MCF 10A (cell line): ENCODE measurements at regions of chr6 and their contacts with region 1.

Region 1: GRCh38 chr6:100116411-100117194 is 122.6 kb upstream of the MCHR2 start:
- DNase-seq: peak; percentile 74
- H3K4me3 Mint-ChIP-seq: no peak overlapping the region
- H3K27ac Mint-ChIP-seq: no peak overlapping the region
- H3K4me1 Mint-ChIP-seq: no peaks in the 10 kb centered on the region
- H3K27me3 Mint-ChIP-seq: no peaks in the 10 kb centered on the region
- CTCF ChIP-seq: peak; percentile 70

Region 2: GRCh38 chr6:98992535-98992934 is 1124.1 kb before region 1 on chr6:
- CTCF ChIA-PET with region 1: no interaction called
- POLR2A ChIA-PET with region 1: no interaction called
- intact Hi-C with region 1: no loop called
- DNase-seq: no peak
- H3K4me3 Mint-ChIP-seq: no peak overlapping the region
- H3K27ac Mint-ChIP-seq: no peak overlapping the region
- H3K4me1 Mint-ChIP-seq: no peaks in the 10 kb centered on the region
- H3K27me3 Mint-ChIP-seq: peaks cover 49% of the 10 kb centered on the region
- CTCF ChIP-seq: no peak

Region 3: DNA sequence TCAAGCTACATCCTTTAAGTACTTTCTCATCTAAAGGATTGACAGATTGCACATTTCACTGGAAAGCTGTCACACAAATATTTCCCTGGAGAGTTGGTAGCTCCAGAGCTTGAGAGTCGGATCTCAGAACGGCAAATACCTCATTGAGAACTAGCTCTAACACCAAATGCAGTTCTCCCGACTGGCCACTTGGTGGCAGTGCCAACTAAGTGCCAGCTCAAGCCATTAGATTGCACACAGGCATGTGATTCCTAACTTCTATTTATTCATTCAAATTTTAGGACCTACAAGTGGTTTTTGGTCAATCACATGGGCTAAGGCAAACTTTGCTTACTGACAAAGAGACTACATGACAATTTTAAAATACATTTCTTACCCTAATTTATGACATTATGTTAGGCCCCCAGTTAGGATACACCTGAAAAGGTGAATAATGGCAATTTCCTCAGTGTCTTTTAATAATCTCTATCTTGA is 114.7 kb before region 1 on chr6:
- CTCF ChIA-PET with region 1: interaction called, 15 read pairs
- POLR2A ChIA-PET with region 1: no interaction called
- intact Hi-C with region 1: no loop called
- DNase-seq: peak; percentile 66
- H3K4me3 Mint-ChIP-seq: no peak overlapping the region
- H3K27ac Mint-ChIP-seq: no peak overlapping the region
- H3K4me1 Mint-ChIP-seq: peaks cover 8% of the 10 kb centered on the region
- H3K27me3 Mint-ChIP-seq: no peaks in the 10 kb centered on the region
- CTCF ChIP-seq: peak; percentile 91

Region 4: DNA sequence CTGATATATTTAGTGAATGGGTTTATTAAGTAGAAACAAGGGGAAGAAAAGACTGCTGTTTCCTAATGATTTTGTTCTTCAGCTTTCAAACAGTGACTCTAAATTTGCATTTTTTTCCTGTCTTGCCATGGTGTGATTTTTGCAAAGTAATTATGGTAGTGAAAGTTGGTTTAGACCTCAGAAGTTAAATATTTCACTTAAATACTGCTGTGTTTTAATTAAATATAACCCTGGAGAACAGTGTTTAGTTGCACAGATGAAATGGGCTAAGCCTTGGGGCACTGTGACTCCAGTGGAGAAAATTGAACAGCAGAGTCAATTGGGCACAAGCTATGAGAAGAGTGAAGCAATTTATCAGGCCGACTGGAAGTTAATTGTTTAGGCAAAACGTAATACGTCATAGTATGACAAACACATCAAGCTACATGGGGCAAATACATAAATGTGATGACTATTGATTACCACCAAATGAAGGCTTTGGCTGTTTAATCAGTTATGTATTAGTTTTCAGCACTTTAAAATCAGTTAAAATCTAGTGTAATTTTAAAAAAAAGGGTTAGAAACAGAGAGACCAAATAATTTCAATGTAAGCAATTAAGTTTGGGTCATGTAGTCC is 11.4 kb before region 1 on chr6:
- CTCF ChIA-PET with region 1: interaction called, 29 read pairs
- POLR2A ChIA-PET with region 1: no interaction called
- intact Hi-C with region 1: no loop called
- DNase-seq: no peak
- H3K4me3 Mint-ChIP-seq: no peak overlapping the region
- H3K27ac Mint-ChIP-seq: no peak overlapping the region
- H3K4me1 Mint-ChIP-seq: peaks cover 5% of the 10 kb centered on the region
- H3K27me3 Mint-ChIP-seq: no peaks in the 10 kb centered on the region
- CTCF ChIP-seq: no peak

Region 5: GRCh38 chr6:100322886-100323285 is 206.3 kb after region 1 on chr6:
- CTCF ChIA-PET with region 1: no interaction called
- POLR2A ChIA-PET with region 1: no interaction called
- intact Hi-C with region 1: loop called (anchors 2 kb)
- DNase-seq: no peak
- H3K4me3 Mint-ChIP-seq: no peak overlapping the region
- H3K27ac Mint-ChIP-seq: no peak overlapping the region
- H3K4me1 Mint-ChIP-seq: no peaks in the 10 kb centered on the region
- H3K27me3 Mint-ChIP-seq: no peaks in the 10 kb centered on the region
- CTCF ChIP-seq: no peak

Region 6: GRCh38 chr6:100479179-100480035 is 362.8 kb after region 1 on chr6:
- CTCF ChIA-PET with region 1: interaction called, 123 read pairs
- POLR2A ChIA-PET with region 1: interaction called, 4 read pairs
- intact Hi-C with region 1: loop called (anchors 1 kb)
- DNase-seq: peak; percentile 55
- H3K4me3 Mint-ChIP-seq: no peak overlapping the region
- H3K27ac Mint-ChIP-seq: no peak overlapping the region
- H3K4me1 Mint-ChIP-seq: peaks cover 8% of the 10 kb centered on the region
- H3K27me3 Mint-ChIP-seq: no peaks in the 10 kb centered on the region
- CTCF ChIP-seq: peak; percentile 79

Region 7: DNA sequence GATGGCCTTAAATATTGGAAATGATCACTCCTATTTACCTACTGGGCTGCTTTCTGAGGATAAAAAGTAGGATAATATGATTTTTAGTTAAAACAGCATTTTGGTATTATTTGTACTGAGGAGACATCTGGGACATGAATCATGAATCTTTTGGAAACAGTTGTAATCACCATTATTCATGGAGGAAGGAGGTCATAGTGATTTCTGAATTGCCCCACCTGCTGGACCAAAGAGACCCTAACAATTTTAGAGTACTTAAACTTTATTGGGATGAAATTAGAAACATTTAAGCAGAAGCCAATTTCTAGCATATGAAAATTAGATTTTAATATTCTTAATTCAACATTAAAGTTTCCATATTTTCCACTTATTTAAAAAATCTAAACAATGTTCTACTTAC is 456.6 kb after region 1 on chr6:
- CTCF ChIA-PET with region 1: interaction called, 5 read pairs
- POLR2A ChIA-PET with region 1: no interaction called
- intact Hi-C with region 1: loop called (anchors 2 kb)
- DNase-seq: peak; percentile 46
- H3K4me3 Mint-ChIP-seq: no peak overlapping the region
- H3K27ac Mint-ChIP-seq: no peak overlapping the region
- H3K4me1 Mint-ChIP-seq: no peaks in the 10 kb centered on the region
- H3K27me3 Mint-ChIP-seq: no peaks in the 10 kb centered on the region
- CTCF ChIP-seq: peak; percentile 22

Region 8: GRCh38 chr6:100664274-100665040 is 547.9 kb after region 1 on chr6:
- CTCF ChIA-PET with region 1: interaction called, 18 read pairs
- POLR2A ChIA-PET with region 1: no interaction called
- intact Hi-C with region 1: no loop called
- DNase-seq: peak; percentile 44
- H3K4me3 Mint-ChIP-seq: no peak overlapping the region
- H3K27ac Mint-ChIP-seq: no peak overlapping the region
- H3K4me1 Mint-ChIP-seq: peaks cover 11% of the 10 kb centered on the region
- H3K27me3 Mint-ChIP-seq: no peaks in the 10 kb centered on the region
- CTCF ChIP-seq: peak; percentile 50